Activated CD4-positive, alpha-beta T cell treated with anti-CD3 and anti-CD28 coated beads for 36 hours (primary cell): ENCODE measurements at regions of chr21 and their contacts with region 1.

Region 1: GRCh38 chr21:39388038-39388810 is 39.3 kb upstream of the HMGN1 start:
- DNase-seq: peak; percentile 95
- ATAC-seq: peak; percentile 83
- H3K4me3 Mint-ChIP-seq: peak overlapping the region; percentile 73
- H3K27ac Mint-ChIP-seq: peak overlapping the region; percentile 89
- H3K4me1 Mint-ChIP-seq: peaks cover 25% of the 10 kb centered on the region
- H3K27me3 Mint-ChIP-seq: no peaks in the 10 kb centered on the region

Region 2: DNA sequence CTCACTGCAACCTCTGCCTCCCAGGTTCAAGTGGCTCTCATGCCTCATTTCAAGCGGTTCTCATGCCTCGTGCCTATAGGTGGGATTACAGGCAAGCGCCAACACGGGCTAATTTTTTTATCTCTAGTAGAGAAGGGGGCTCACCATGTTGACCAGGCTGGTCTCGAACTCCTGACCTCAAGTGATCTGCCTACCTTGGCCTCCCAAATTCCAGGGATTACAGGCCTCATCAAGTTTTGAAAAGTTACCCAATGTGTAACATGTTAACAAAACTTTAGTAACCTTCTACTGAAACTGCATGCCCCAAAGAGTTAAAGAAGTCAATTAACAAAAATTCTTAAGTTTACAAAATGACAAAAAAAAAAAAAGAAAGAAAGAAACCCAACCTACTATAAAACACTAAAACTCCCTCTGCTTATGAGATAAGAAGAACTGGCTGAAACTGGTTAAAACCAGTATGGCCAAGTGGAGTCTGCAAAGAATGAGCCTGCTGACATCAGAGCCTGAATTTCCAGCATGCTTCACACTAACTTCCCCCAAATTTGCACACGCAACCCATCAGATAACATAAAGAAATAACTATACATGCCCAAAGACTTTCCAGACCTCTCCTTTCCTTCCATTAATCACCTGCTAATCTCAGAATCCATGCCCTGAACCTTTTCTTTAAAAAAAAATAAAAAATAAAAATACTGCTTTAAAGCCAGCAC is 179.4 kb before region 1 on chr21:
- CTCF ChIA-PET with region 1: no interaction called
- POLR2A ChIA-PET with region 1: no interaction called
- intact Hi-C with region 1: loop called in 1 of 2 experiments (anchors 1 kb)
- DNase-seq: no peak
- ATAC-seq: peak; percentile 49
- H3K4me3 Mint-ChIP-seq: no peak overlapping the region
- H3K27ac Mint-ChIP-seq: peak overlapping the region; percentile 59
- H3K4me1 Mint-ChIP-seq: peaks cover 32% of the 10 kb centered on the region
- H3K27me3 Mint-ChIP-seq: no peaks in the 10 kb centered on the region

Region 3: GRCh38 chr21:39349211-39350093 is 38.8 kb before region 1 on chr21:
- CTCF ChIA-PET with region 1: interaction called, 18 read pairs
- POLR2A ChIA-PET with region 1: interaction called, 4 read pairs
- intact Hi-C with region 1: loop called in 1 of 2 experiments (anchors 1 kb)
- DNase-seq: peak; percentile 99
- ATAC-seq: peak; percentile 89
- H3K4me3 Mint-ChIP-seq: peak overlapping the region; percentile 92
- H3K27ac Mint-ChIP-seq: peak overlapping the region; percentile 100
- H3K4me1 Mint-ChIP-seq: peaks cover 33% of the 10 kb centered on the region
- H3K27me3 Mint-ChIP-seq: no peaks in the 10 kb centered on the region